ENCODE measurements at regions of chr2 and their contacts with region 1.

Region 1: GRCh38 chr2:21042958-21043743 is 722 bp downstream of the APOB start:
- DNase-seq: peak; percentile 98
- ATAC-seq: peak; percentile 66
- H3K4me3 ChIP-seq: peak overlapping the region; percentile 88 to 96 (median 91)
- H3K27ac ChIP-seq: peak overlapping the region; percentile 99
- H3K4me1 ChIP-seq: peaks cover 76% of the 10 kb centered on the region
- H3K27me3 ChIP-seq: no peaks in the 10 kb centered on the region; a peak in 1 of 5 replicates
- CTCF ChIP-seq: peak; percentile 95
- EP300 ChIP-seq: peak; percentile 98 to 99
- POLR2A ChIP-seq: peak in 1 of 2 experiments; percentile 94; a peak in 2 of 4 replicates
- RAD21 ChIP-seq: peak; percentile 99

Region 2: GRCh38 chr2:21032338-21033236 is 10.6 kb before region 1 on chr2:
- CTCF ChIA-PET with region 1: no interaction called
- POLR2A ChIA-PET with region 1: interaction called, 124 read pairs
- in situ Hi-C with region 1: no loop called
- intact Hi-C with region 1: no loop called
- DNase-seq: no peak
- ATAC-seq: peak; percentile 8
- H3K4me3 ChIP-seq: peak overlapping the region in 1 of 3 experiments; percentile 14; a peak in 1 of 6 replicates
- H3K27ac ChIP-seq: peak overlapping the region; percentile 8
- H3K4me1 ChIP-seq: peaks cover 99% of the 10 kb centered on the region
- H3K27me3 ChIP-seq: no peaks in the 10 kb centered on the region
- CTCF ChIP-seq: no peak
- EP300 ChIP-seq: no peak
- POLR2A ChIP-seq: peak; percentile 59 to 73; a peak in 3 of 4 replicates
- RAD21 ChIP-seq: no peak

Region 3: DNA sequence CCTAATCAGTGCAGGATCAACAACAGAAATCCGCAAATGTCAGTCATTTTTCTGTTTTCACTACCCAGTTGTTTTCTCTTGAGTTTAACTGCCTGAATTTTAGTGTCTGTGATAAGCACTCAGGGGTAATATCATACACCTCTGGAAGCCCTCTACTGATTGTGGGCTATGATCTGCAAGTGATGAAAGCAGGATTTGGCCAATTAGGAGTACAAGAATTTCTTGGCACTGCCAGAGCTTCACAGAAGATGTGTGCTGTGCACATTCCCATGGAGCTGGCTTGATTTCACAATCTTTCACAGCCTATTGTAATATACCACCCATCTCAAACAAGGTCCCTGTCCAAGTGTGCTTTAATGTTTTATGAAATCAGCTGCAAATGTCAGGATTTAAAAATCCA is 53.3 kb after region 1 on chr2:
- CTCF ChIA-PET with region 1: no interaction called
- POLR2A ChIA-PET with region 1: interaction called, 50 read pairs
- in situ Hi-C with region 1: no loop called
- intact Hi-C with region 1: loop called (anchors 1 kb)
- DNase-seq: peak; percentile 89
- ATAC-seq: peak; percentile 75
- H3K4me3 ChIP-seq: no peak overlapping the region
- H3K27ac ChIP-seq: peak overlapping the region; percentile 36
- H3K4me1 ChIP-seq: peaks cover 71% of the 10 kb centered on the region
- H3K27me3 ChIP-seq: no peaks in the 10 kb centered on the region
- CTCF ChIP-seq: no peak
- EP300 ChIP-seq: peak; percentile 34 to 37; a peak in 1 of 4 replicates
- POLR2A ChIP-seq: no peak
- RAD21 ChIP-seq: no peak

Region 4: GRCh38 chr2:21118302-21118920 is 75.3 kb after region 1 on chr2:
- CTCF ChIA-PET with region 1: interaction called, 92 read pairs
- POLR2A ChIA-PET with region 1: interaction called, 103 read pairs
- in situ Hi-C with region 1: loop called (anchors 5 kb)
- intact Hi-C with region 1: loop called (anchors 1 kb)
- DNase-seq: peak; percentile 81
- ATAC-seq: peak; percentile 98
- H3K4me3 ChIP-seq: no peak overlapping the region
- H3K27ac ChIP-seq: no peak overlapping the region
- H3K4me1 ChIP-seq: peaks cover 22% of the 10 kb centered on the region
- H3K27me3 ChIP-seq: no peaks in the 10 kb centered on the region
- CTCF ChIP-seq: peak; percentile 89
- EP300 ChIP-seq: peak in 1 of 2 experiments; percentile 36; a peak in 1 of 4 replicates
- POLR2A ChIP-seq: no peak
- RAD21 ChIP-seq: peak; percentile 91

Region 5: DNA sequence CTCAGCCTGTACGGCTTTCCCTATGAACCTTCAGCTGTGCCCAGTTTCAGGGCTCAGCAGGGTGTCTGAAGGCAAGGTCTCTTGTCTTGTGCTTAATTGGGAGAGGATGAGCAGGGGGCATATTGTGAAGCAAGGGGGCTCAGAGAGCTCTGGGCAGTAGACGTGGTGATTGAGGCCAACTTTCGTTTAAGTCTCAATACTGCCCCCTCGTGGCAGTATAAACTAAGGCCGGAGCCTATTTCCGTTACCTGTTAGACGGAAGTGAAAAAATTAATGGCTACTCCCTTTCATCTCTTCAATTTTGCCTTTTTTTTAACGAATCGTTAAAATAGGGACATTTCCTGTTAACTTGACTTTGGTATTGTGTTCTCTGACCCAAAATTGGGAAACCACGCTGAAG is 274.0 kb after region 1 on chr2:
- CTCF ChIA-PET with region 1: no interaction called
- POLR2A ChIA-PET with region 1: no interaction called
- in situ Hi-C with region 1: no loop called
- intact Hi-C with region 1: loop called (anchors 1 kb)
- DNase-seq: peak; percentile 60
- ATAC-seq: peak; percentile 92
- H3K4me3 ChIP-seq: no peak overlapping the region
- H3K27ac ChIP-seq: no peak overlapping the region
- H3K4me1 ChIP-seq: no peaks in the 10 kb centered on the region
- H3K27me3 ChIP-seq: peaks cover 0 to 10% of the 10 kb centered on the region in 2 experiments; a peak in 3 of 5 replicates
- CTCF ChIP-seq: peak; percentile 73
- EP300 ChIP-seq: no peak
- POLR2A ChIP-seq: no peak
- RAD21 ChIP-seq: peak; percentile 42; the same call in 1 of the 2 replicates

Measured in HepG2 (cell line).